ENCODE measurements at regions of chr1 and their contacts with region 1.

Region 1: DNA sequence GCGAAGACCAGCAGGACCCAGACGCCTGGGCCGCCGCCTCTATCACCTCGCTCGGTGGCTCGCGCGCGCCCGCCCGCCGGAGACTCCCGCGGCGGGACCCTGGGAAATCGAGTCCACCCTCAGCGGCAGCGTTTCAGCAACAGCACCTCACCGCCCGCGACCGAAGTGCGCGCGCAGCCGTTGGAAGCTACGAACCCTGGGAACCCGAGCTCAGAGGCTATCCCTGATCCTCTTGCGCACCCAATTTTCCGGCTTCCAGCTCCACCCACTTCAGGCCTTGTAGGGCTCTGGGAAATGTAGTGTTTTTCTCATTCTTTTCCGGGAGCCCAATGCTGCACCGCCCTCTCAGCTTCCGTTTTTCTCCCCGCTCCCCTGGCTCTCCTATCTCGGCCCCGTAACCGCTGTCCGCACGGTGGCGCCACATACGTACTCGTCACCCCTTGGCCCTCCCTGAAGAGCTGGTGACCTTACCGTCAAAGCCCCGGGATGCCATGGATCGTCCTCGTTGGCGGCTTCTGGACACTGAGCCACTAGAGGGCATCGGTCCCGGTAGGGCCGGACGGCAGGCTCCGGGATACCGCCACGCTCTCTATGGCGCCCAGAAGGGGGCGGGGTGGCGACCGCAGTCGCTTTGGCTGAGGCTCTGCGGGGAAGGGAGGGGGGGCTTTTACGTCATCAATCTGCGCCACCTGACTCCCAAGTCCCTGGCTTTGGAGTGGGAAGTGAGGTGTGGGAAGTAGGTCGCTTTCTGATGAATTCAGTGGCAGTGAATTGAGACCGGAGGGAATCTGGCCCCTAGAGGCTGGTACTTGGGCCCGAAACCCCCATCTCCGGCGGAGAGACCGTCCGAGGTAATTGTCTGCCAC is at the starts of genes ODR4 and TPR:
- DNase-seq: peak; percentile 96 to 98
- H3K4me3 ChIP-seq: peak within 1 kb of the TSS; percentile 92
- H3K27ac ChIP-seq: peak within 1 kb of the TSS; percentile 93
- H3K4me1 ChIP-seq: peaks cover 25% of the 10 kb centered on the region; the same call in 1 of the 2 replicates
- H3K27me3 ChIP-seq: no peaks in the 10 kb centered on the region
- CTCF ChIP-seq: peak; percentile 91
- total RNA-seq, gene ODR4: 13.7 and 19.6 TPM in 2 replicates
- total RNA-seq, gene TPR: 104 and 123 TPM in 2 replicates

Region 2: GRCh38 chr1:185608177-185608576 is 767.1 kb before region 1 on chr1:
- CTCF ChIA-PET with region 1: no interaction called
- POLR2A ChIA-PET with region 1: no interaction called
- intact Hi-C with region 1: no loop called
- DNase-seq: no peak
- H3K4me3 ChIP-seq: no peak overlapping the region
- H3K27ac ChIP-seq: no peak overlapping the region
- H3K4me1 ChIP-seq: no peaks in the 10 kb centered on the region
- H3K27me3 ChIP-seq: no peaks in the 10 kb centered on the region
- CTCF ChIP-seq: no peak

Region 3: DNA sequence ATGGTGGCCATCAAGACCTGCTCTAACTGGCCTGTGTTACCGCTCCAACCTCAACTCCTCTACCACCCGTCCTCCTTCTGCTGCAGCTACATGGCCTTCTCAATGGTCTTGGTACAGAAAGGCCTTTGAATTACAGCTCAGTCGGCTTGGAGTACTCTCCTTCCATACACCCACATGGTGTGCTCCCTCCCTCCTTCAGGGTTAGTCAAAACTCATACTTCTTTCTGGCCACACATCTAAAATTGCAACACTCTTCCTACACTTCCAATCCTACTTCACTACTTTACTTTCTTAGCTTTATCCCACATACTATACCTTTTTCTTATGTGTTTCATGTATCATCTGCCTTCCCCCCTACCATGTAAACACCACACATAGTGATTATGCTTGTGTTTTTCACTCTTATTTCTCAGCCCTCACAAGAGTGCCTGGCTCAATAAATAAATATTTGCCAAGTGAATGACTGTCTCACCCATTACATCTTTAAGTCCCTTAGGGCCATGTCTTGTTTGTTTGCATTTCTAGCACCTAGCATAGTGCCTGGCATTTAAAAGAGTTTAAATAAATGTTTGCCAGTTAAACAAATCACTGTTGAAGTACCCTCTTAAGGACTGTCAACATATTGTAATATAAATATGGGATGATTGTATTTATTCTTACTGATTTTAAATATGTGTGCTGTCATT is 678.7 kb before region 1 on chr1:
- CTCF ChIA-PET with region 1: no interaction called
- POLR2A ChIA-PET with region 1: interaction called, 17 read pairs
- intact Hi-C with region 1: no loop called
- DNase-seq: no peak
- H3K4me3 ChIP-seq: no peak overlapping the region
- H3K27ac ChIP-seq: no peak overlapping the region
- H3K4me1 ChIP-seq: no peaks in the 10 kb centered on the region
- H3K27me3 ChIP-seq: no peaks in the 10 kb centered on the region
- CTCF ChIP-seq: no peak

Region 4: DNA sequence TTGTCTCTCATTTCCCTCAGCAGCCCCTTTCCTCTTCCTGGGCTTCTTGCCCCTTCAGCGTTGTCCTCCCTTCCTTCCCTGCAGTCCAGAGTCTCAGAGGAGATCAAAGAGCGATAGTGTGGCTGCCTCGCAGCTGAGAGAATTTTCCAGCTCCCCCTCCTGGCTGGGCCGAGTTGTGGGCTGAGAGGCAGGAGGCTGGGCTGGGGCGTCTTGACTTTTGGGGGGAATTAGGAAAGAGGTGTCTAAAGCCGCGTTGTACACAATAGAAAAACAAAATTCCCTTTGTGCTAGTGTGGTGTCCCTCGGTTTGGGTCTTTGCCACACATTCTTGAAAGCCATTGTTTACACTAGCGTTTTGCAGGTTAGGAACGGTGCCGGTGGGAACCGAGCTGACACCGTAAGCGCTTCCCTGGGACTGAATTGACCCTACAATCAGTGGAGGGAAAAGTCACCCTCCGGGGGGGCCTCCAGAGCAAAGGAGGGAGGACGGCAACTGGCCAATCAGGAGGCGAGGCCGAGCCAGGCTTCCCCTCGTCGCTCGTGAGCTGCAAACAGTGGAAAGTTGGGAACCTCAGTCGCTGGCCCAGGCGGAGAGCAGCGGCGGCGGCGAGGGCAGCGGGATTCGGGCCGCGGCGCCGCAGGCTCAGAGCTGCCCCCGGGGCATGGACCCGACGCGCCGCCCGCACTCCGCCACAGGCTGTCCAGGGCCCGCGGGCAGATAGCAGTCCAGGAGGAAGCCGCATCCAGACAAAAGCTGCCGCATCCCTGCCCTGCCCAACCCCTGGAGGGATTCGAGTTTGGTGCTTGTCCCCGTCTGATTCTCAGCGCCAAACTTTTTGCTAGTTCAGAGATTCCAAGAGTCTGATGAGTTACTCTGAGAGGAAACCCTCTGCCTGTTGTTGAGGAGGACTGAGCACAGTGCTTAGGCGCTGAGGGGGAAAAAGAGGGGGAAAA is 641.2 kb before region 1 on chr1 and contains the start of gene HMCN1:
- CTCF ChIA-PET with region 1: interaction called, 12 read pairs
- POLR2A ChIA-PET with region 1: no interaction called
- intact Hi-C with region 1: no loop called
- DNase-seq: peak in 1 of 2 experiments; percentile 39
- H3K4me3 ChIP-seq: peak within 1 kb of the TSS; percentile 79
- H3K27ac ChIP-seq: no peak within 1 kb of the TSS
- H3K4me1 ChIP-seq: peaks cover 14% of the 10 kb centered on the region
- H3K27me3 ChIP-seq: no peaks in the 10 kb centered on the region
- CTCF ChIP-seq: no peak; the same call in 1 of the 2 replicates
- total RNA-seq, gene HMCN1: 0.31 and 0.83 TPM in 2 replicates